HepG2 (cell line): ENCODE measurements at regions of chr20 and their contacts with region 1.

Region 1: DNA sequence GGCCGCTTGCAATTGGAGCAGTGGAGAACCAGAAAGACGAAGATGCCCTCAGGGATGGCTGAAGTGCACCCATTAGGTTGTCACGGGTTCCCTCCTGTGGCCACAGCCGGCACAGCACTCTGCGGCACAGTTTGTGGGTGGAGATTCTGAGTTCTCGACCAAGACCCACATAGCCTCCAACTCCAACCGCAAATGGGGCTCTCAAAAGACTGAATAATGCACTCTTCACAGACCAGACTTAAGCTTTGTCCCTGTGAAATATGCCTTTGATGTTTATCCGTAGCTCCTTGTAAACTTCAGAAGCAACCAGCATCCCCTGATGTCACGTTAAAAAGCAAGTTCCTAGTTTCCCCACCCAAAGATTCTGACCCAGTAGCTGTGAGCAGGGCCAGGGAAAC is 934 bp upstream of the CST9 start:
- DNase-seq: peak; percentile 77
- ATAC-seq: peak; percentile 90
- H3K4me3 ChIP-seq: no peak overlapping the region
- H3K27ac ChIP-seq: no peak overlapping the region
- H3K4me1 ChIP-seq: peaks cover 29% of the 10 kb centered on the region
- H3K27me3 ChIP-seq: peaks cover 2 to 28% of the 10 kb centered on the region in 2 experiments; a peak in 4 of 5 replicates
- CTCF ChIP-seq: peak; percentile 99
- EP300 ChIP-seq: peak in 1 of 2 experiments; percentile 49; a peak in 1 of 4 replicates
- POLR2A ChIP-seq: no peak
- RAD21 ChIP-seq: peak; percentile 99

Region 2: DNA sequence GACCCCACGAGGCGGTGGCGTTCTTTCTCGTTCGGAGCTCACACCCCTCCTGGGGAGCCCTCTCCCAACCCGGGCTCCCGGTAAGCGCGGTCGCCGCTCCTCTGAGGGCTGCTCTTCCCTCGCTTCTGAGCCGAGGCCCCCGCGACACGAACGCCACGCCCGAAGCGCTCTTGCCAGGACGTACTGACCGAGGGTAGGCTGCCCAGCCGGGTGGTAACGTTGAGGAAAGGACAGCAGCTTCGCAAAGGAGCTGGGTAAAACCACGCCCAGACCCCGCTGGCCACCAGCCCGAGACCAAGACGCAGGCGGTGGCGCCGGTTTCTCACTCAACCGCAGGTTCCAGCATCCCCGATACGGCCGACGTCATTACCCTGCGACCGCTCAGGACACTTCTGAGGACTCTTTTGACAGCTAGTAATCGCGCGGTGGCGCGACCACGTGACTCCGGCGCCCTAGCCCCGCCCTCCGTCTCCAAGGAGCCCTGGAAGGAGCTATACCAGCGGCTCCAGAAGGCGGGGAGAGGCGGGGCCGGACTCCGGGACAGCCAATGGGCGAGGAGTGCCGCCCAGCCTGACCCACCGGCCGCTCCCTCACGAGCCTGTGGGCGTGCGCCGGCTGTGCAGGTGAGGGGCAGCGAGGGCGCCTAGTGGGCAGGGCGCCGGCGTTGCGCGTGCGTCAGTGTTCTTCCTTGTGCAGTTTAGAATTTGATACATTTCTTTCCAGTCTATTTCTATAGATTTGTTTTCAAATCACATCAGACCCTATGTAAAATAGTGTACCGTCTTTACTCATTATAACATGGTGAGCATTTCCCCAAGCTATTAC is 248.7 kb before region 1 on chr20:
- CTCF ChIA-PET with region 1: no interaction called
- POLR2A ChIA-PET with region 1: no interaction called
- in situ Hi-C with region 1: no loop called
- intact Hi-C with region 1: loop called (anchors 5 kb)
- DNase-seq: peak; percentile 98
- ATAC-seq: peak; percentile 76
- H3K4me3 ChIP-seq: peak overlapping the region; percentile 55 to 91 (median 65)
- H3K27ac ChIP-seq: peak overlapping the region; percentile 77
- H3K4me1 ChIP-seq: peaks cover 45% of the 10 kb centered on the region
- H3K27me3 ChIP-seq: no peaks in the 10 kb centered on the region; a peak in 1 of 5 replicates
- CTCF ChIP-seq: peak; percentile 52
- EP300 ChIP-seq: 0 out of 4 replicates have a peak, but pooled peaks of 1 of the 2 experiments have one; percentile 9
- POLR2A ChIP-seq: peak; percentile 73 to 85
- RAD21 ChIP-seq: no peak; the same call in 1 of the 2 replicates

Region 3: DNA sequence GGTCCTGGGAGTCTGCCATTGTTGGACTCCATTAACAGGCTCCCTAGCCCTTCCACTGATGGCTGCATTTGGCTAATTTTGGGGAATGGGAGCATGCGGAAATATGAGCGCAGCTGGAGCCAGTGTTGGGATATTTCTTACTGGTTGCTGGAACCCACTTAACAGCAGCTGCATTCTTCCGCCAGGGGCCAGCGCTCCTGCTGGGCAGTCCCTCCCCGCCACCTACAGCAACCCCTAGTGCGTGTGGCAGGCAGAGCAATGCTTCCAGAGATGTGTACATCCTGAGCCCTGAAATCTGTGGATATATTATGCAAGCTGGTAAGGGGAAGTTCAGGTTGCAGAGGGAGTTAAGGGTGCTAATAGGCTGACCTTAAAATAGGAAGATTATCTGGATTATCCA is 99.3 kb before region 1 on chr20:
- CTCF ChIA-PET with region 1: no interaction called
- POLR2A ChIA-PET with region 1: no interaction called
- in situ Hi-C with region 1: no loop called
- intact Hi-C with region 1: loop called (anchors 2 kb)
- DNase-seq: peak; percentile 37
- ATAC-seq: peak; percentile 84
- H3K4me3 ChIP-seq: no peak overlapping the region
- H3K27ac ChIP-seq: no peak overlapping the region
- H3K4me1 ChIP-seq: peaks cover 18% of the 10 kb centered on the region
- H3K27me3 ChIP-seq: peaks cover 6 to 31% of the 10 kb centered on the region in 2 experiments; a peak in 3 of 5 replicates
- CTCF ChIP-seq: peak; percentile 33
- EP300 ChIP-seq: no peak
- POLR2A ChIP-seq: no peak
- RAD21 ChIP-seq: no peak

Region 4: DNA sequence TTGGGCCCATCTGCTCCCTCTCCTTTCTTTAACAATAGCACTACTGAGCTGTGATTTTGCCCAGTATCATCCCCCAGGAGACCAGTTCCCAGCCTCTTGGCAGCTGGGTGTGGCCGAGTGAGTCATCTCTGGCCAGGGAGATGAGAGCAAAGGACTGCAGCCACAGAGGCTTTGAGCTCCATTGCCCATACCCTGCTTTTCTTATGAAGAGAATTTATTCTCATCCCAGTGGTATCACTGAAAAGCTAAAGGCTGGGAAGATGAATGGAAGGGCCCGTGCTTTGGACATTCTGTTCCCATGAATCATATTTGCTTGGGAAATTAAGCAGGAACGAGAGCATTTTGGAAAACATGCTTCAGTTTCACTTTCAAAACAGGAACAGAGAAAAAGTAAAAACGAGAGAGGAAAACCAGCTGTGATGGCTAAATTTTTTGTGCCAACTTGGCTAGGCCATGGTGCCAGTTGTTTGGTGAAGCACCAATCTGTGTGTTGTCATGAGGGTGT is 16.2 kb after region 1 on chr20:
- CTCF ChIA-PET with region 1: no interaction called
- POLR2A ChIA-PET with region 1: interaction called, 22 read pairs
- in situ Hi-C with region 1: no loop called
- intact Hi-C with region 1: loop called (anchors 1 kb)
- DNase-seq: peak; percentile 72
- ATAC-seq: peak; percentile 78
- H3K4me3 ChIP-seq: peak overlapping the region; percentile 42 to 49 (median 44)
- H3K27ac ChIP-seq: no peak overlapping the region
- H3K4me1 ChIP-seq: peaks cover 73% of the 10 kb centered on the region
- H3K27me3 ChIP-seq: no peaks in the 10 kb centered on the region
- CTCF ChIP-seq: no peak
- EP300 ChIP-seq: no peak
- POLR2A ChIP-seq: no peak
- RAD21 ChIP-seq: no peak

Region 5: DNA sequence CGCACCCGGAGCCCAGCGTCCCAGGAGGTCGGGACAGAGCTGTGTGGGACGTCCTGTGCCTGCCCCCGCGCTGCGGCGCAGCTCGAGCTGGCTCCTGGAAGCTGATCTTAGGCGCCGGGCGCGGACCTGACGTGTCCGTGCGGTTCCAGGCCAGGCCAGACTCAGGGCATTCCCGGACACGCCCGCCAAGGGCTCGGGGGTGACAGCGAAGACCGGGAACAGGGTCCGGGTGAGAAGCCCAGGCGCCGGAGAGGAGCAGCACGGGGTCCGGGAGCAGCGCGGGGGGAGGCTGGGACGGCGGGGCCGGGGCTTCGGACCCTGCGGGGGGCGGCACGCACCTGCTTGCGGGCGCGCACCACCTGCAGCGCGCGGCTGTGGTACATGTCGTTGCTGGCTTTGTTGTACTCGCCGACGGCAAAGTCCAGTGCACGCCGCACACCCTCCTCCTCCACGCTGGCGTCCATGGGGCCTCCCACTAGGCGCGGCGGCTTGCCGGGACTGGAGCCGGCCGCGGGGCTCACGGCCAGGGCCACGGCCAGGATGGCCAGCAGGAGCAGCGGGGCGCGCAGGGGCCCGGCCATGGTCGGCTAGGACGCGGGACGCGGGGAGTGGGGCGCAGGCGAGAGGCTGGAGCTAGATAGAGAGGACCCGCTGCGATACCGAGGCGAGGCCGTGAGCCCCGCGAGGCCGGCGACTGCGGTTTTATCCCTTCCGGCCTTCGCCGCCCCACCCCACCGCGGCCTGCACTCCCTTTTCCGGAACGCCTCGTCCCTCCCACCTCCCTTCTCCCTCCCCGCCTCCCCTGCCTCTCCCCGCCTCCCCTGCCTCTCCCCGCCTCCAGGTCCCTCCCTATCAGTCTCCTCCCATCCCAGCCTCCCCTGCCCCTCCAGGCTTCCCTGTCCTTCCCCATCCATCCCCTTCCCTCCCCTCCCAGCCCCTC is 30.9 kb after region 1 on chr20 and contains the start of gene CST3:
- CTCF ChIA-PET with region 1: interaction called, 4 read pairs
- POLR2A ChIA-PET with region 1: interaction called, 16 read pairs
- in situ Hi-C with region 1: no loop called
- intact Hi-C with region 1: no loop called
- DNase-seq: peak; percentile 87
- ATAC-seq: peak; percentile 70
- H3K4me3 ChIP-seq: peak within 1 kb of the TSS; percentile 80 to 93 (median 88)
- H3K27ac ChIP-seq: peak within 1 kb of the TSS; percentile 91
- H3K4me1 ChIP-seq: peaks cover 89% of the 10 kb centered on the region
- H3K27me3 ChIP-seq: no peaks in the 10 kb centered on the region; a peak in 1 of 5 replicates
- CTCF ChIP-seq: no peak; the same call in 1 of the 2 replicates
- EP300 ChIP-seq: peak in 1 of 2 experiments; percentile 32; a peak in 3 of 4 replicates
- POLR2A ChIP-seq: peak; percentile 99 to 100
- RAD21 ChIP-seq: peak; percentile 81
- total RNA-seq, gene CST3: 300 and 690 TPM in 2 replicates